A549 (cell line): ENCODE measurements at regions of chr22 and their contacts with region 1.

Region 1: GRCh38 chr22:28788601-28789000 is 11.8 kb downstream of the XBP1 start:
- DNase-seq: no peak
- ATAC-seq: no peak
- H3K4me3 ChIP-seq: no peak overlapping the region
- H3K27ac ChIP-seq: no peak overlapping the region
- H3K4me1 ChIP-seq: peaks cover 12% of the 10 kb centered on the region
- CTCF ChIP-seq: no peak
- EP300 ChIP-seq: no peak
- POLR2A ChIP-seq: no peak
- RAD21 ChIP-seq: no peak

Region 2: DNA sequence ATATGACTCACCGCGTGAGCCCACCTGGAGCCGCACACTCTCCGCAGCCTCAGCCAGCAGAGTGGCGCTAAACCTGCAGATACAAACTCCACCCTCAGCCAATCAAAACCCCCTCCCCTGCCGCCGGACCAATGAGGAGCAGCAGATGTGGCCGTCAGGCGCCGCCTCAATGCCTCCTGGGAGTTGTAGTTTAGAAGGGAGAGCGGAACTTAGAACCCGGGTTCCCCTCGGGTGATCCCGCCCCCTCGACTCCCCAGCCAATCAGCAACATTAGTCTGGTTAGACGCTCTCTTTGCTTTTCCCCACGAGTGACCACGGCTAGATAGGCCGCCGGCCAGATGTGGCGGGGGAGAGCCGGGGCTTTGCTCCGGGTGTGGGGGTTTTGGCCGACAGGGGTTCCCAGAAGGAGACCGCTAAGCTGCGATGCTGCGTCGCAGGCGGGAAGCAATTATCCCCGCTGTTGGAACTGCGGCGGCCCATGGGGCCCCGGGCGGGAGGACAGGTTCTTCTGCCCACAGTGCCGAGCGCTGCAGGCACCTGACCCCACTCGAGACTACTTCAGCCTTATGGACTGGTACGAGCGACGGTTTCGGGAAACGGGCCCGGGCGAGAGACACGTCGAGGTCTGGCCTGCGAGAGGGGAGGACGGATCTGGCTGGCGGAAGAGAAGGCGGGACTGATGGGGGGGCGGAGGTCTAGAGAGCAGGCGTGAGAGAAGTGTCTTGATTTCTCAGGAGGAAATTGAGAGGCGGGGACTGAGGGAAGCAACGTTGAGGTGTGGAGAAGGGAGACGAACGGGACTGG is 46.6 kb before region 1 on chr22 and contains the starts of genes CHEK2 and HSCB:
- CTCF ChIA-PET with region 1: no interaction called
- POLR2A ChIA-PET with region 1: no interaction called
- DNase-seq: peak; percentile 89 to 97
- ATAC-seq: peak; percentile 96 to 98
- H3K4me3 ChIP-seq: peak within 1 kb of the TSS; percentile 92
- H3K27ac ChIP-seq: peak within 1 kb of the TSS; percentile 91 to 100
- H3K4me1 ChIP-seq: peaks cover 8% of the 10 kb centered on the region; the same call in 2 of the 3 replicates
- CTCF ChIP-seq: no peak
- EP300 ChIP-seq: no peak
- POLR2A ChIP-seq: peak; percentile 50
- RAD21 ChIP-seq: no peak
- polyA plus RNA-seq, gene CHEK2: 26.1 and 29.6 TPM in 2 replicates
- polyA plus RNA-seq, gene HSCB: 20.2 and 22.4 TPM in 2 replicates

Region 3: DNA sequence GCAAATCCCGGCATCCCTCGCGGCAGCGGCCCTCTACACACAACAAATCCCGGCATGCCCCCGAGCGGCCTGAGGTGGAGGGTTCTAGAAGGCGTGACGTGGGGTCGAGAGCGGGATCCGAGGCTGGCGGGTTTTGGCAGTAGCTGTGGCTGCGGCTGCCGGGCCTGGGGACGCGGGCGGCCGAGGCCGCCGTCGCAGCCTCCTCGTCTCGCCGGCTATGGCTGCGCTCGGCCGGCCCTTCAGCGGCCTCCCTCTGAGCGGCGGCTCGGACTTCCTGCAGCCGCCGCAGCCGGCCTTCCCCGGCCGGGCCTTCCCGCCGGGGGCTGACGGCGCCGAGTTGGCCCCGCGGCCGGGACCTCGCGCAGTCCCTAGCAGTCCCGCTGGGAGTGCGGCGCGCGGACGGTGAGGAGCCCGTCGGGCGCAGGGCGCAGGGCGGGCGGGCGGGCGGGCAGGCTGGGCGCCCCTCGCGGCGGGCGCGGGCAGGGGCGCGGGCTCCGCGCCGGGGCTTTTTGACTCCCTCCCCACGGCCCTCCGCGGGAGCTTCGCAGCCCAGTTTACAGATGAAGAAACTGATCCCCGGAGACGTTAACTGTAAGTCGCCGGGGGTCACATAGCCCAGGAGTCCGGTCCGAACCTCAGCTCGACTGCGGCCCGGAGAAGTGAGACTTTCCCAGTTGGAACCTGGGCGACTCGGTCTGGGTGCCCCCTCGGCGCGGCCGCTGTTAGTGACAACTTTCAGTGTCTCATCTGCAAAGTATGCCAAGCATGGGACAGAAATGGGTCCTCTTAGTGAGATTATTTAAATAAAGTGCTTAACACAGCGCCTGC is 15.8 kb before region 1 on chr22 and contains the start of gene CCDC117:
- CTCF ChIA-PET with region 1: interaction called, 17 read pairs
- POLR2A ChIA-PET with region 1: no interaction called
- DNase-seq: peak; percentile 89 to 94
- ATAC-seq: peak; percentile 96 to 97
- H3K4me3 ChIP-seq: peak within 1 kb of the TSS; percentile 84
- H3K27ac ChIP-seq: peak within 1 kb of the TSS; percentile 95 to 97
- H3K4me1 ChIP-seq: no peaks in the 10 kb centered on the region
- CTCF ChIP-seq: peak; percentile 26; the same call in 1 of the 3 replicates
- EP300 ChIP-seq: no peak
- POLR2A ChIP-seq: peak; percentile 73
- RAD21 ChIP-seq: no peak
- polyA plus RNA-seq, gene CCDC117: 15.7 and 24.1 TPM in 2 replicates